AG04450 (cell line): ENCODE measurements at regions of chr17 and their contacts with region 1.

Region 1: GRCh38 chr17:57243171-57243948 is 13.0 kb upstream of the MSI2 start:
- DNase-seq: peak; percentile 21
- H3K4me3 ChIP-seq: no peak overlapping the region
- H3K27ac ChIP-seq: no peak overlapping the region
- H3K27me3 ChIP-seq: peaks cover 17% of the 10 kb centered on the region
- CTCF ChIP-seq: peak; percentile 100

Region 2: DNA sequence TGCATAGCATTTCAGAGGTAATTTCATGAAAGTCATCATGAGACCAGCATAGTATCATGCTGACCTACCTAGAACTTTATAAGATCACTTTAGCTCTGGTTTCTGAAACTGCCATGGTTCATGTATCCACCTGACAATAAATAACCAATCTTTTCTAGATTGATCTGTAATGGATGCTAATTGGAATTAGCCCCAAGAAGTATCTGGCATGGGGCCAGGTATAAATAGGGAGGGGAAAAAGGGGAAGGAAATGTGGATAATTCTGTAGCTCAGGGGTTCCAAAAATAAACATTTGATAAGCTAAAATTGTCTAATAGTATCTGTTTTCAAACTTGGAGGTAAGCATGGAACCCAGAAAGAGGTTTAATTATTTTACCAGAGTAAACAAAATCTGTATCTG is 836.6 kb before region 1 on chr17:
- CTCF ChIA-PET with region 1: no interaction called
- POLR2A ChIA-PET with region 1: no interaction called
- DNase-seq: no peak
- H3K4me3 ChIP-seq: no peak overlapping the region
- H3K27ac ChIP-seq: no peak overlapping the region
- H3K27me3 ChIP-seq: no peaks in the 10 kb centered on the region
- CTCF ChIP-seq: no peak

Region 3: DNA sequence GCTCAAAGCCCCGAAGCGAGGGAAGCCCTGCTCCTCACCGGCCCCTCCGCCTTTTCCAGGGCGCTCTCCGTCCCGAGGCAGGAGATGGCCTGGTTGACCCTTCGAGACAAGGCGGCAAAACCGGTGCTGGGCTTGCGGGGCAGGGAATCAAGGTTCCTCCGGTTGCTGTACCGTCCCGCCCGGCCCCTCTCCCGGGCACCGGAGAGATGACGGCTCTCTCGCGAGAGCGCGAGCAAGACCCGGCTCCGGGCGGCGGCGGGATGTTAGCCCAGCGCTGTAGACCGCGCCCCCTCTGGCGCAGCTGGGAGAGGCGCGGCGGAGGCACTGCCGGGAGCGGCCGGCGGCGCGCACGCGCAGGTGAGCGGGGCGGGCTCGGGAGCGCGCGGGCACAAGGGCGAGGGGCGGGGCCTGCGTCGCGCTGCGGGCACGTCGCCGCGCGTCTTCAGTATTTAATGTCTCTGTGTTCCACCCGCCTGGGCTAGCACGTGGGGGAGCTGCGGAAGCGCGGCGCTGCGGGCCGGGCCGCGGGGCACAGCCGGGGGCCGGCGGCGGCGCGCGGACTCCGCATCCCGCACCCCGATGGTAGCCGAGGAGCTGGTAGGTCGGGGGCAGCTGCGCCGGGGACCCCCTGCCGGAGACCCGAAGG is 158.4 kb before region 1 on chr17 and contains the start of gene AKAP1:
- CTCF ChIA-PET with region 1: no interaction called
- POLR2A ChIA-PET with region 1: no interaction called
- DNase-seq: peak; percentile 70
- H3K4me3 ChIP-seq: peak within 1 kb of the TSS; percentile 99
- H3K27ac ChIP-seq: peak within 1 kb of the TSS; percentile 85
- H3K27me3 ChIP-seq: no peaks in the 10 kb centered on the region
- CTCF ChIP-seq: peak; percentile 18; the same call in 1 of the 2 replicates
- polyA plus RNA-seq, gene AKAP1: 6.5 and 12.4 TPM in 2 replicates

Region 4: GRCh38 chr17:57478484-57479250 is 235.3 kb after region 1 on chr17:
- CTCF ChIA-PET with region 1: interaction called, 37 read pairs
- POLR2A ChIA-PET with region 1: no interaction called
- DNase-seq: no peak
- H3K4me3 ChIP-seq: no peak overlapping the region
- H3K27ac ChIP-seq: peak overlapping the region; percentile 0
- H3K27me3 ChIP-seq: peaks cover 5% of the 10 kb centered on the region
- CTCF ChIP-seq: no peak

Region 5: GRCh38 chr17:57584050-57584551 is 340.7 kb after region 1 on chr17:
- CTCF ChIA-PET with region 1: interaction called, 44 read pairs
- POLR2A ChIA-PET with region 1: interaction called, 4 read pairs
- DNase-seq: no peak
- H3K4me3 ChIP-seq: no peak overlapping the region
- H3K27ac ChIP-seq: no peak overlapping the region
- H3K27me3 ChIP-seq: no peaks in the 10 kb centered on the region
- CTCF ChIP-seq: no peak

Region 6: DNA sequence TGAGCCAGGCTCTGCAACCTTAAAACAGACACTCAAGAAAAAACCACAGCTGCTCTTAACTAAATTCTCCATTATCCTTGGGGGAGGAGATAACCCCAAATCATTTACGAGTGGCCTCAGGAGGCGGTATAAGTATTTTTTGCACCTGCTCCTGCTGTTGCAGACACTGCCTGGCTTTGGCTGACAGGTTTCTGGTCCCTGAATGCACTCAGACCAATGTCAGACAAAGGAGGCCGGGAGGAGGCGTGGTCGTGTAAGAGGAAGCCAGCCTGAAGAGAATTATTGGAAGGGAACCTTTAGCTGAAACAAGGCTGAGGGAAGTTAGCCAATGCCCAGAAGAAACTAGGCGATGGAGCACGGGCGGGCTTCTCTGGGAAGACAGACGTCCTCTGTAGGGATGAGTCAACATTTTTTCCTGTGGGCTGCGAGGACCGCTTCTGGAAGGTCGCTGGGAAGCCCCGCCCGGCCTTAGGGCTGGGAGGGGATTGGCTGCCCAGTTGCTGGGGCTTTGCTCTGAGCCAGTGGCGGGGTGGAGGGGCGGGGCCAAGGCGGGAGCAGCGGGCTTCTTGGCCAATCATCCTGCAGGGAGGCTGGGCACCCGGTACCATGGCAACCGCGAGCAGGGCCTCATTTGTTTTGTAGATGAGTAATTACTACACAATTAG is 419.4 kb after region 1 on chr17:
- CTCF ChIA-PET with region 1: interaction called, 53 read pairs
- POLR2A ChIA-PET with region 1: no interaction called
- DNase-seq: peak; percentile 98
- H3K4me3 ChIP-seq: peak overlapping the region; percentile 41
- H3K27ac ChIP-seq: peak overlapping the region; percentile 93
- H3K27me3 ChIP-seq: no peaks in the 10 kb centered on the region
- CTCF ChIP-seq: no peak

Region 7: DNA sequence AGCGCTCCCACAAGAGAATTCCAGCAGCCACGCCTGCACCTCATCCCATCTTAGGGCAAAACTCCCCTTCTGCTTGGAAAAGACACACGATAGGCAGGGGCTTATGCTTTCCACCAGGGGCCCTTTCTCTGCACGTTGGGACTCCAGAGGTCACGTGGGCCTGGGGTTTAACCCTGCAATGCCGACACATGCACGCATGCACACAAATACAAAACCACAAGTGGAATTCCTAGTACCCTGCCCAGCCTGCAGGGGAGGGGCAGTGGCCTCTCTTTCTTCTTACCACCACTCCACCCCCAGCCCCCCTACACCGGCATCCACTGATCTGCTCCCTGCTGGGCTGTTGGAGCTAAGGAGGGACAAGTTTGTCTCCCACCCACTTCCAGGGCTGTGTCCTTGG is 518.5 kb after region 1 on chr17:
- CTCF ChIA-PET with region 1: interaction called, 15 read pairs
- POLR2A ChIA-PET with region 1: no interaction called
- DNase-seq: no peak
- H3K4me3 ChIP-seq: no peak overlapping the region
- H3K27ac ChIP-seq: no peak overlapping the region
- H3K27me3 ChIP-seq: peaks cover 24% of the 10 kb centered on the region
- CTCF ChIP-seq: no peak

Region 8: DNA sequence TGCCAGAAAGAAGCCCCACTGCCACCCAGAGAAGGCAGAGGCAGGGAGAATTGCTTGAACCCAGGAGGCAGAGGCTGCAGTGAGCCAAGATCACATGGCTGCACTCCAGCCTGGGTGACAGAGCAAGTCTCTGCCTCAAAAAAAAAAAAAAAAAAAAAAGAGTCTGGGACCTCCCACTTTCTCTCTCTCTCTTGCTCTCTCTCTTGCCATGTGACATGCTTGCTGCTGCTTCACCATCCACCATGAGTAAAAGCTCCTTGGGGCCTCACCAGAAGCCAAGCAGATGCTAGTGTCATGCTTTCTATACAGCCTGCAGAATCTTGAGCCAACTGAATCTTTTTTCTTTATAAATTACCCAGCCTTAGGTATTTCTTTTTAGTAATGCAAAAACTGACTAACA is 785.2 kb after region 1 on chr17:
- CTCF ChIA-PET with region 1: interaction called, 19 read pairs
- POLR2A ChIA-PET with region 1: no interaction called
- DNase-seq: no peak
- H3K4me3 ChIP-seq: no peak overlapping the region
- H3K27ac ChIP-seq: no peak overlapping the region
- H3K27me3 ChIP-seq: peaks cover 4% of the 10 kb centered on the region
- CTCF ChIP-seq: no peak